ENCODE measurements at regions of chr22 and their contacts with region 1.

Region 1: DNA sequence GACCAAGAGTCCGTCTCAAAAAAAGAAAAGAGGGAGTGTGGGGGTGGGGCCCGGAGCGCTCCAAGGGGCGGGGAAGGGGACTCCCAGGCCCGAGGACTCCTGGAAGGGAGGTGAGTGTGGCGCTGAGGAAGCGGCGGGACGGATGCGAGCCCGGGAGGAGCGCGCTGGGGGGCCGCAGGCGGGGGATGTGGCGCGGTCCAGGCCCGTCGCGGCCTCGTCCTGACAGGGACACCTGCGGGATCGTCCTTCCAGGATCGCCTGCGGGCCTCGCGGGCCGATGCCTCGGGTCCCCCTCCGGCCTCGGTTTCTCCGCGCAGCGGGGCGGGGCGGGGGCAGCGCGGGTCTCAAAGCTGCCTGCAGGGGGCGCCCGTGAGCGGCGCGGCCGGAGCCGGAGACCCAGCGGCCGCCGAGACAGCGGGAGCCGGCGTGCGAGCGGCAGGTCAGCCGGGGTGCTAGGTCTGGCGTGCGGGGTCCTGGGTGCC is 3.8 kb upstream of the ADORA2A start:
- DNase-seq: peak in 2 of 10 donors; percentile 47 to 65
- H3K4me3 ChIP-seq: peak overlapping the region in 58 of 59 donors; percentile 29 to 72 (median 53)
- H3K27ac ChIP-seq: peak overlapping the region in 21 of 59 donors; percentile 39 to 81 (median 61)
- H3K27me3 ChIP-seq: peaks cover 0 to 29% (median 10%) of the 10 kb centered on the region in 45 donors
- CTCF ChIP-seq: peak; percentile 39 to 95 (median 76)

Region 2: DNA sequence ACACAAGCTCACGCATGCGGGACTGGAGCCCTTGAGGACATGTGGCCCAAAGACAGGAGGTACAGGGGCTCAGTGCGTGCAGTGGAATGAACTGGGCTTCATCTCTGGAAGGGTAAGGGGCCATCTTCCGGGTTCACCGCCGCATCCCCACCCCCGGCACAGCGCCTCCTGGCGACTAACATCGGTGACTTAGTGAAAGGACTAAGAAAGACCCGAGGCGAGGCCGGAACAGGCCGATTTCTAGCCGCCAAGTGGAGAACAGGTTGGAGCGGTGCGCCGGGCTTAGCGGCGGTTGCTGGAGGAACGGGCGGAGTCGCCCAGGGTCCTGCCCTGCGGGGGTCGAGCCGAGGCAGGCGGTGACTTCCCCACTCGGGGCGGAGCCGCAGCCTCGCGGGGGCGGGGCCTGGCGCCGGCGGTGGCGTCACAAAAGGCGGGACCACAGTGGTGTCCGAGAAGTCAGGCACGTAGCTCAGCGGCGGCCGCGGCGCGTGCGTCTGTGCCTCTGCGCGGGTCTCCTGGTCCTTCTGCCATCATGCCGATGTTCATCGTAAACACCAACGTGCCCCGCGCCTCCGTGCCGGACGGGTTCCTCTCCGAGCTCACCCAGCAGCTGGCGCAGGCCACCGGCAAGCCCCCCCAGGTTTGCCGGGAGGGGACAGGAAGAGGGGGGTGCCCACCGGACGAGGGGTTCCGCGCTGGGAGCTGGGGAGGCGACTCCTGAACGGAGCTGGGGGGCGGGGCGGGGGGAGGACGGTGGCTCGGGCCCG is 529.4 kb before region 1 on chr22 and contains the start of gene MIF:
- intact Hi-C with region 1: no loop called
- DNase-seq: peak; percentile 94 to 98 (median 96)
- H3K4me3 ChIP-seq: peak within 1 kb of the TSS; percentile 59 to 92 (median 82)
- H3K27ac ChIP-seq: peak within 1 kb of the TSS; percentile 74 to 99 (median 97)
- H3K27me3 ChIP-seq: no peaks in the 10 kb centered on the region
- CTCF ChIP-seq: peak; percentile 51 to 87 (median 77)
- total RNA-seq, gene MIF: 175 to 552 (median 413) TPM

Region 3: GRCh38 chr22:24503137-24503842 is 79.7 kb after region 1 on chr22:
- intact Hi-C with region 1: loop called in 1 of 2 experiments (anchors 5 kb)
- DNase-seq: peak in 3 of 10 donors; percentile 37 to 49 (median 40)
- H3K4me3 ChIP-seq: no peak overlapping the region
- H3K27ac ChIP-seq: no peak overlapping the region
- H3K27me3 ChIP-seq: no peaks in the 10 kb centered on the region
- CTCF ChIP-seq: peak; percentile 16 to 70 (median 53)

Measured in dorsolateral prefrontal cortex (tissue), 120 donors.